Upper lobe of right lung (tissue), 1 donor: ENCODE measurements at regions of chr9 and their contacts with region 1.

Region 1: GRCh38 chr9:78525986-78526560 is 229.1 kb downstream of the PSAT1 start:
- DNase-seq: no peak
- ATAC-seq: no peak
- H3K4me3 ChIP-seq: no peak overlapping the region
- H3K27ac ChIP-seq: no peak overlapping the region
- H3K4me1 ChIP-seq: no peaks in the 10 kb centered on the region
- H3K27me3 ChIP-seq: no peaks in the 10 kb centered on the region
- CTCF ChIP-seq: no peak

Region 2: GRCh38 chr9:76658535-76659231 is 1867.4 kb before region 1 on chr9:
- intact Hi-C with region 1: loop called (anchors 5 kb)
- DNase-seq: no peak
- ATAC-seq: peak; percentile 89
- H3K4me3 ChIP-seq: no peak overlapping the region
- H3K27ac ChIP-seq: no peak overlapping the region
- H3K4me1 ChIP-seq: peaks cover 15% of the 10 kb centered on the region
- H3K27me3 ChIP-seq: no peaks in the 10 kb centered on the region
- CTCF ChIP-seq: peak; percentile 59

Region 3: DNA sequence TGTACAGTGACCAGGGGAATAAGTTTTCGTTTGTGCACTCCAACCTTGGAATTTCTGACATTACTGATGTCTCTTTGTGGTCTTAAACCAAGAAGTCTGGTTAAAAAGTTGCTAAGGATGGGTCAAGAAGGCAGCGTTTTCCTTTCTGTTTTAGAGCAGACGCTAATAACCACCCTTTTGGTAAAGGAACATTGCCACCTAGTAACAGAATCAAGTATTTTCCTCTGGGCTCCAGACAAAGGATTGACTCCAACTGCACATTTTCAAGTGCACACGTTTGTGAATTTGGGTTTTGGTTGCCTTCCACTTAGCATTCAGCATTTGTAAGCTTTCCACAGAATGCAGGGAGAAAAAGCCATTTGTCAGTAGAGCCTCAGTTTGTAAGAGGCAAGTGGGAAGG is 312.4 kb before region 1 on chr9:
- intact Hi-C with region 1: no loop called
- DNase-seq: no peak
- ATAC-seq: peak; percentile 80
- H3K4me3 ChIP-seq: no peak overlapping the region
- H3K27ac ChIP-seq: no peak overlapping the region
- H3K4me1 ChIP-seq: peaks cover 12% of the 10 kb centered on the region
- H3K27me3 ChIP-seq: no peaks in the 10 kb centered on the region
- CTCF ChIP-seq: peak; percentile 50

Region 4: DNA sequence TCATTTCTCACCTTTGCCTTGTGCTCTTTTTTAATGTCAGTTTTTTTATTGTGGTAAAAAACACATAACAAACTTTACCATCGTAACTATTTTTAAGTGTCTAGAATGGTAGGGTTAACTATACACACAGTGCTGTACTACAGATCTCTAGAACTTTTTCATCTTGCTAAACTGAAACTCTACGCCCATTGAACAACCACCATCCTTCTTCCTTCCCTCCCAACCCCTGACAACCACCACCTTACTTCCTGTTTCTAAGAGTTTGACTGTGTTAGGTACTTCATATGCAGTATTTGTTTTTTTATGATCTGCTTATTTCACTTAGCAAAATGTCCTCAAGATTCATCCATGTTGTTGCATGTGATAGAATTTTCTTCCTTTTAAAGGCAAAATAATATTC is 174.3 kb before region 1 on chr9:
- intact Hi-C with region 1: no loop called
- DNase-seq: no peak
- ATAC-seq: no peak
- H3K4me3 ChIP-seq: no peak overlapping the region
- H3K27ac ChIP-seq: no peak overlapping the region
- H3K4me1 ChIP-seq: no peaks in the 10 kb centered on the region
- H3K27me3 ChIP-seq: no peaks in the 10 kb centered on the region
- CTCF ChIP-seq: no peak